ENCODE measurements at regions of chr6 and their contacts with region 1.

Region 1: GRCh38 chr6:26216356-26216885 is 129.2 kb downstream of the HFE start:
- DNase-seq: peak; percentile 98
- H3K4me3 ChIP-seq: peak overlapping the region; percentile 62
- H3K27ac ChIP-seq: peak overlapping the region; percentile 92
- H3K4me1 ChIP-seq: peaks cover 3% of the 10 kb centered on the region
- H3K27me3 ChIP-seq: no peaks in the 10 kb centered on the region
- CTCF ChIP-seq: no peak

Region 2: GRCh38 chr6:26031595-26032339 is 184.7 kb before region 1 on chr6:
- CTCF ChIA-PET with region 1: no interaction called
- POLR2A ChIA-PET with region 1: interaction called, 11 read pairs
- intact Hi-C with region 1: no loop called
- DNase-seq: peak; percentile 99
- H3K4me3 ChIP-seq: peak overlapping the region; percentile 67
- H3K27ac ChIP-seq: peak overlapping the region; percentile 91
- H3K4me1 ChIP-seq: peaks cover 21% of the 10 kb centered on the region
- H3K27me3 ChIP-seq: no peaks in the 10 kb centered on the region
- CTCF ChIP-seq: peak; percentile 33; the same call in 1 of the 2 replicates

Region 3: DNA sequence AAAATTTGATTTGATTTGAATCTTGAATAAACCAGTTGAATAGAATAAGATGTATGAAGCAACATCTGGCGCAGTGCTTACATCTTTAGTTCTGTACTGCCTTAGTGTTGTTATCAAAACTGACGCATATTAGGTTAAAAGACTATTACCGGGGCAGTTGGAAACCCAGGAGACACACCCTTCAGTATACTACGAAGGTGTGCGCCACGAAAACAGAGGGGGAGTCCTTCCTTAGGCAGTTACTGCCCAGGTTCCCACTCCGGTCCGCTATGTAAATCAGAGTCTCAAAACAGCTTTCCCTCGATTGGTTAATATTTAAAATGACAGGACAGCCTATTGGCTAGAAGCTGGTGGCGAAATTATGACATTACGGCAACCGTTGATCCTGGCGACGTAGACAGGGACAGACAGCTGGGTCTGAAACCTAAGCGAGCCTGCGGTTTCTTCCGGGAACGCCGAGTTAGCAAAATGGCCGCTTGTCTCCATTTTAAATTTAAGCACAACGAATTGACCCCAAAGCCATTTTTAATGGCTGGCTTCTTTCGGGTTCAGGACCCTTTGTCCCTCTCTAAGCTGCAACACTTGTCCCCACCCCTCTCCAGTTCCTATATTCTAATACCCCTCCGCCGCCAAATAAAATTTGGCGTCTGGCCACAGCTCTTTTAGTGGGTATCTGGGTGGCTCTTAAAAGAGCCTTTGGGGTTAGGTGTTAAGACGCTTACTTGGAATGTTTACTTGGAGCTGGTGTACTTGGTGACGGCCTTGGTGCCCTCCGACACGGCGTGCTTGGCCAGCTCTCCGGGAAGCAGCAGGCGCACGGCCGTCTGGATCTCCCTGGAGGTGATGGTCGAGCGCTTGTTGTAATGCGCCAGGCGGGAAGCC is 93.4 kb before region 1 on chr6:
- CTCF ChIA-PET with region 1: no interaction called
- POLR2A ChIA-PET with region 1: interaction called, 14 read pairs
- intact Hi-C with region 1: no loop called
- DNase-seq: peak; percentile 98
- H3K4me3 ChIP-seq: peak overlapping the region; percentile 81
- H3K27ac ChIP-seq: peak overlapping the region; percentile 91
- H3K4me1 ChIP-seq: peaks cover 16% of the 10 kb centered on the region
- H3K27me3 ChIP-seq: no peaks in the 10 kb centered on the region
- CTCF ChIP-seq: no peak

Region 4: DNA sequence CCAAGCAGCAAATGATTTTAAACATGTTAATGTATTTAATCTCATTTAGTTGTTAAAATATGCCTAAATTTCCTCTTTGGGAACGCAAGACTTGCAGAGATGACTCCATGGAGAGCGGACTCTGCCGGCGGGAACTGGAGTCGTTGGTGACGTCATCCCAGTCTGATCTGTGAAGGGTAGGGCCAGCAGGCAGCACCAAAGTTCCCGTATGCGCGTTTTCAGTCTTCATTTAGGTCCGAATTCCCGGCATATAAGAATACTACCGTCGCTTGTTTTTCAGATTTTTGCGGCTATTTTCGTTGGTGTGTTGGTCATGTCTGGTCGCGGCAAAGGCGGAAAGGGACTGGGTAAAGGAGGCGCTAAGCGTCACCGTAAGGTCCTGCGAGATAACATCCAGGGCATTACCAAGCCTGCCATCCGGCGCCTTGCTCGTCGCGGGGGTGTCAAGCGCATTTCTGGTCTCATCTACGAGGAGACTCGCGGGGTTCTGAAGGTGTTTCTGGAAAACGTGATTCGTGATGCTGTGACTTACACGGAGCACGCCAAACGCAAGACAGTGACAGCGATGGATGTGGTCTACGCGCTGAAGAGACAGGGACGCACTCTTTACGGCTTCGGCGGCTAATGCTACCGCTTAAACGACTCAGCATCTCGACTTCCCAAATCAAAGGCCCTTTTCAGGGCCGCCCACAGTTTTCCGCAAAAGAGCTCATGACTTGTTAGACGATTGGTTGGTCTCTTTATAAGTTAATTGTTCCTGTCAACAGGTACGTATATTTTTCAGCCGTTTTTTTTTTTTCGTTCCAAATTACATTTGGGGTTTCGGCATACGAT is 11.9 kb before region 1 on chr6:
- CTCF ChIA-PET with region 1: no interaction called
- POLR2A ChIA-PET with region 1: interaction called, 85 read pairs
- intact Hi-C with region 1: no loop called
- DNase-seq: peak; percentile 99
- H3K4me3 ChIP-seq: peak overlapping the region; percentile 69
- H3K27ac ChIP-seq: peak overlapping the region; percentile 89
- H3K4me1 ChIP-seq: peaks cover 13% of the 10 kb centered on the region
- H3K27me3 ChIP-seq: no peaks in the 10 kb centered on the region
- CTCF ChIP-seq: peak; percentile 51

Region 5: GRCh38 chr6:26249957-26250697 is 33.7 kb after region 1 on chr6:
- CTCF ChIA-PET with region 1: no interaction called
- POLR2A ChIA-PET with region 1: interaction called, 18 read pairs
- intact Hi-C with region 1: loop called (anchors 1 kb)
- DNase-seq: peak; percentile 93
- H3K4me3 ChIP-seq: peak overlapping the region; percentile 68
- H3K27ac ChIP-seq: peak overlapping the region; percentile 96
- H3K4me1 ChIP-seq: peaks cover 3% of the 10 kb centered on the region
- H3K27me3 ChIP-seq: no peaks in the 10 kb centered on the region
- CTCF ChIP-seq: peak; percentile 44; the same call in 1 of the 2 replicates